Activated CD4-positive, alpha-beta memory T cell treated with anti-CD3 and anti-CD28 coated beads for 36 hours (primary cell): ENCODE measurements at regions of chr17 and their contacts with region 1.

Region 1: DNA sequence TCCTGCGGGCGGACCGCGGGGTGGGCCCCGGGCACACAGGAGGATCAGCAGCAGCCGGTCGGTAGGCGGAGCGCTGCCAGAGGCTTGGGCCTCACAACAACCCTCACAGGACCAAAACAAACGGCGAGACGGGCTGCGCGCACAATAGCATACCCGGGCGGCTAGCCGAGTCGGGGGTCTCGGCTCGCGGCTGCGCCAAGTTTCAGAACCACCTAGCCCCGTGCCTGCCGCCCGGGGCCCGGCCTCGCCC is 747 bp downstream of the ULK2 start:
- DNase-seq: peak; percentile 68
- H3K4me3 Mint-ChIP-seq: peak overlapping the region; percentile 80
- H3K27ac Mint-ChIP-seq: peak overlapping the region; percentile 13
- H3K4me1 Mint-ChIP-seq: peaks cover 11% of the 10 kb centered on the region
- H3K27me3 Mint-ChIP-seq: no peaks in the 10 kb centered on the region

Region 2: DNA sequence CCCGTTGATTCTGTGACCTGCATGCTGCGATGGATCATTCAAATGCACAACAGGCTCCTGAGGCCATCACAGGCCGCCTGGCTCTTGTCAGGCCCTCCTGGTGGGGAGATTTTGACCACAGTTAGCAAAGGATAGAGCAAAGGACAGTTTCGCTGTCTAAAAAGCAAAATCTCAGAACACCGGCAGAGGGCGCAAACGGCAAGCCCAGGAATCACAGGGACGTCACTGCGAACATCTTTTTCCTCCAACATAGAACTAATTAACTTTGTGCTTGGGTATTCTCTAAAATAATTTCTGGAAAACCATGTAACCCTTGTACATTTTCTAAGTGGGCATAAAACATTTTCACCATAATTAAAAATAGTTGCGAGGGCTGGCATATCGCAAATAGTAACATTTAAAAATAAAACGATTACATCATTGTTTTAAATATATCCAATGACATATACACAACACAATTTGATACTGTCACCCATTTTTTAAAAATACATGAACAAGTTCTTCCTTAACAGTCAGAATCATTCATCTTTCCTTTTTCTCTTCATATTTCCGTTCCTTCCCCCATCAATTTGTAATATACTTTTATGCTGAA is 353.0 kb before region 1 on chr17:
- CTCF ChIA-PET with region 1: no interaction called
- POLR2A ChIA-PET with region 1: no interaction called
- intact Hi-C with region 1: loop called (anchors 10 kb)
- DNase-seq: peak; percentile 76
- H3K4me3 Mint-ChIP-seq: no peak overlapping the region
- H3K27ac Mint-ChIP-seq: no peak overlapping the region
- H3K4me1 Mint-ChIP-seq: peaks cover 3% of the 10 kb centered on the region
- H3K27me3 Mint-ChIP-seq: no peaks in the 10 kb centered on the region

Region 3: DNA sequence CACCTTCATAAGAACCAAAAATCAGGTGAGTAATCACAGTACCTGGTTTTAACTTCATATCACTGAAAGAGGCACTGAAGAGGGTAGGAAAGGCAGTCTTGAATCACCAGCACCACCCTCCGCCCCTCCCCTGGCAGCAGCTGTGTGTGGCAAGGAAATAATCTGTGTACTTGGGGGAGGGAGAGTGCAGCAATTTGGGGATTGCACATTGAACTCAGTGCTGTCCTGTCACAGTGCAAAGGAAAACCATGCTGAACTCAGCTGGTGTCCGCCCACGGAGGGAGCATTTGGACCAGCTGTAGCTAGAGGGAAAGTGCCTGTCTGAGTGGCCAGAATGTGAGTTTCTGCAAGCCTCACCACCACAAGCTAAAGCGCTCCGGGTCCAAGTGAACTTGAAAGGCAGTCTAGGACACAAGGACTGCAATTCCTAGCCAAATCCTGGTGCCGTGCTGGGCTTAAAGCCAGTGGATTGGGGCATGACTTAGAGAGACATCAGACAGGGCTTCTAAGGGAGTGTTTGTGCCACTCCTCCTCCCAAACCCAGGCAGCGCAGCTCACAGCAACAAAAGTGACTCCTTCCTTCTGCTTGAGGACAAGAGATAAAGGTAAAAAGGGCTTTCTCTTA is 79.1 kb before region 1 on chr17:
- CTCF ChIA-PET with region 1: no interaction called
- POLR2A ChIA-PET with region 1: no interaction called
- intact Hi-C with region 1: loop called (anchors 5 kb)
- DNase-seq: peak; percentile 67
- H3K4me3 Mint-ChIP-seq: no peak overlapping the region
- H3K27ac Mint-ChIP-seq: no peak overlapping the region
- H3K4me1 Mint-ChIP-seq: peaks cover 4% of the 10 kb centered on the region
- H3K27me3 Mint-ChIP-seq: no peaks in the 10 kb centered on the region

Region 4: DNA sequence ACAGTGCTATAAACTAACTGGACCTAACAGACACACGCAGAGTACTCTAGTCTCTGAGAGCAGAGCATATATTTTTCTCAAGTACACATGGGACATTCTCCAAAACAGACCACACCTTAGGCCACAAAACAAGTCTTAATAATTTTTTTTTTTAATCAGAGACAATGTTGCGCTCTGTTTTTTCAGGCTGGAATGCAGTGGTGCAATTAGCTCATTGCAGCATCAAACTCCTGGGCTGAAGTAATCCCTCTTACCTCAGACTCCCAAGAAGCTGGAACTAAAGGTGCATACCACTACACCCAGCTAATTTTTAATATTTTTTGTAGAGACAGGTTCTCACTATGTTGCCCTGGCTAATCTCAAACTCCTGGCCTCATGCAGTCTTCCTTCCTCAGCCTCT is 36.9 kb before region 1 on chr17:
- CTCF ChIA-PET with region 1: no interaction called
- POLR2A ChIA-PET with region 1: no interaction called
- intact Hi-C with region 1: no loop called
- DNase-seq: no peak
- H3K4me3 Mint-ChIP-seq: no peak overlapping the region
- H3K27ac Mint-ChIP-seq: no peak overlapping the region
- H3K4me1 Mint-ChIP-seq: peaks cover 4% of the 10 kb centered on the region
- H3K27me3 Mint-ChIP-seq: no peaks in the 10 kb centered on the region

Region 5: GRCh38 chr17:19897901-19898300 is 30.9 kb after region 1 on chr17:
- CTCF ChIA-PET with region 1: no interaction called
- POLR2A ChIA-PET with region 1: no interaction called
- intact Hi-C with region 1: no loop called
- DNase-seq: no peak
- H3K4me3 Mint-ChIP-seq: no peak overlapping the region
- H3K27ac Mint-ChIP-seq: no peak overlapping the region
- H3K4me1 Mint-ChIP-seq: no peaks in the 10 kb centered on the region
- H3K27me3 Mint-ChIP-seq: no peaks in the 10 kb centered on the region